ENCODE measurements at regions of chr6 and their contacts with region 1.

Region 1: GRCh38 chr6:21791581-21791980 is 198.0 kb downstream of the SOX4 start:
- H3K4me3 ChIP-seq: no peak overlapping the region
- H3K27ac ChIP-seq: no peak overlapping the region
- H3K4me1 ChIP-seq: no peaks in the 10 kb centered on the region
- CTCF ChIP-seq: no peak

Region 2: DNA sequence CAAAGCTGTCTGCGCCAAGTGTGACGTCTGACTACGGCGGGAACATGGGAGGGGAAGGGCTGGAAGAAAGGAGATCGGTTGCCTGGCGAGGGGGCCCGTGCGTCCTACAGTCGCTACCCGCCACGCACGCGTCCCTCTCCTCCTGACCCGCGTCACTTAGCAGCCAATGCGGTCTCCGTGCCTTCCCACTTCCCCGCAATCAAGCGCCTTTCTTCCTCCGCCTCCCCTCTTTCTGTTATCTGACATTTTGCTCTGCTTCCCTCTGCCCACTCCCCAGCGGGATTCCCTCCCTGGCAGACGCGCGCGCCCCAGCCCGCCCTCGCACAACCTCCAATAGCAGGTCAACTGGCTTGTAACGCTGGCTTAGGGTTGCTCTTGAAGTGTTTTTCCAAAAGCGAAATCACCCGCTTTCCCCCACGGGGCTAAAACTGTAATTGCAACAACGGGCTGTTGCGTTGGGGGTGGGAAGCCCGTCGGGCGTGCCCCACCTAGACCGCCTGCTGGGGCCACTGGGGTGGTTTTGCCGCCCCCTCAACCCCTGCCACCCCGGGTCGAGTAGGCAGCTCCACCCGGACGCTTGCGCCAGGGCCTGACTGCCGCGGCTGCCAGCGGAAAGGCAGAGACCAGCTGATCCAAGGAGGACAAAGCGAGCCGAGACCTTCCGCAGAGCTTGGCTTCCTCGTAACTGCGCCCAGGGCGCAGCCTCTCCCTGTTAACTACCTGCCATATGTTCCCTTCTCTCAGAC is 204.2 kb before region 1 on chr6:
- CTCF ChIA-PET with region 1: no interaction called
- POLR2A ChIA-PET with region 1: interaction called, 10 read pairs
- H3K4me3 ChIP-seq: peak overlapping the region; percentile 53
- H3K27ac ChIP-seq: peak overlapping the region; percentile 97
- H3K4me1 ChIP-seq: peaks cover 7% of the 10 kb centered on the region; the same call in 1 of the 2 replicates
- CTCF ChIP-seq: peak; percentile 71

Region 3: GRCh38 chr6:21748343-21749056 is 43.1 kb before region 1 on chr6:
- CTCF ChIA-PET with region 1: no interaction called
- POLR2A ChIA-PET with region 1: no interaction called
- H3K4me3 ChIP-seq: no peak overlapping the region
- H3K27ac ChIP-seq: peak overlapping the region; percentile 83
- H3K4me1 ChIP-seq: peaks cover 49% of the 10 kb centered on the region
- CTCF ChIP-seq: no peak

Measured in HEK293 (cell line).